ENCODE measurements at regions of chr19 and their contacts with region 1.

Region 1: DNA sequence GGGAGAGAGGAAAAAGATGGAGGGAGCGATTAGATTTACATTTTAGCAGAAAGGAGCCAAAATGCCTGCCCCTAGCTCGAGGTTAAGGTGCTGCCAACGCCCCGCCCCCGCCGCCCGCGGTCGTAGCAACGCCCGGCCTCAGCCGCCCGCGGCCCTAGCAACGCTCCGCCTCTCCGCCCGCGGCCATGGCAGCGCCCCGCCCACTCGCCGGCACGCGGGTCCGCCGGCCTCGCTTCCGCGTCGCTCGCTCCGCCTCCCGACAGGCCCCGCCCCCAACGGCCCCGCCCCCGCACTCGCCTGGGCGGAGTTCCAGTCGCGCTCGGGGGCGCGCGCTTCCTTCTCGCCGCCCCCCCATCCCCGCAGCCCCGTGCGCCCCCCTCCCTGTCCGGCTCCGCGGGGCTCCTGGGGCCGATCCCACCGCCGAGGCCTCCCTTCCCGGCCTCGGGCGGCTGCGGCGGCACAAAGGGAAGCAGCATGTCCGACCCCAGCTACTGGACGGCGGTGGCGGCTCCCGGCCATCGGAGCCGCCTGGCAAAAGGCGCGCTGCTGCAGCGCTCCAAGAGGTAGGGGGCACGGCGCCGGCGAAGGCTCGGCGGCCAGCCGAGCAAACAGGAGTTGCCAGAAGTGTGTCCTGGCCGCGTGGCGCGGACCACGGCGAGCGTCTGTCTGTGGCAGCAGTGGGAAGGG is 20.3 kb downstream of the MAST3 start:
- DNase-seq: peak in 1 of 2 experiments; percentile 97
- H3K4me3 ChIP-seq: peak overlapping the region; percentile 70 to 85 (median 76)
- H3K27ac ChIP-seq: peak overlapping the region; percentile 50
- H3K4me1 ChIP-seq: peaks cover 3 to 21% (median 8%) of the 10 kb centered on the region in 4 experiments
- H3K27me3 ChIP-seq: peaks cover 0 to 3% (median 1%) of the 10 kb centered on the region in 4 experiments; a peak in 1 of 7 replicates
- CTCF ChIP-seq: no peak
- EP300 ChIP-seq: no peak
- POLR2A ChIP-seq: peak in 1 of 2 experiments; percentile 74; a peak in 2 of 3 replicates
- RAD21 ChIP-seq: no peak; a peak in 1 of 4 replicates

Region 2: DNA sequence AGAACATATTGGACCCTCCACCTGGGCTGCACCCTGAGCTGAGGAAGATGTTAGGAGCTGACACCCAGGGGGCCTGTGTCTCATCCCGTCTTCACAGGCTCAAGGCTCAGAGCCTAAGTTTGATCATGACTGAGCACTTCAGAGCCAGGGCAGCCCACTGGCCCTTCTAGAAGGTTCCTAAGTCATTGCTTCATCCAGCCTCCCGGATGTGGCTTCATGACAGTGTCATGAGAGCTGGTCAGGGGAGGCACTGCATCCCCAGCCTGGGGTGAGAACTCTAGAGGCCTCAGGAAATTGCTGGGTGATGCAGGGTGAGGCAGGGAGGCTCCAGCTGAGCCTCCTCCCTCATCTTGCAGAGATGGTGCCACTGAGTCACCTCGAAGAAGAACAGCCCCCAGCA is 10.2 kb after region 1 on chr19:
- CTCF ChIA-PET with region 1: interaction called, 4 read pairs
- POLR2A ChIA-PET with region 1: interaction called, 19 read pairs
- DNase-seq: no peak
- H3K4me3 ChIP-seq: no peak overlapping the region
- H3K27ac ChIP-seq: no peak overlapping the region
- H3K4me1 ChIP-seq: no peaks in the 10 kb centered on the region
- H3K27me3 ChIP-seq: no peaks in the 10 kb centered on the region
- CTCF ChIP-seq: no peak
- EP300 ChIP-seq: no peak
- POLR2A ChIP-seq: no peak
- RAD21 ChIP-seq: no peak

Region 3: DNA sequence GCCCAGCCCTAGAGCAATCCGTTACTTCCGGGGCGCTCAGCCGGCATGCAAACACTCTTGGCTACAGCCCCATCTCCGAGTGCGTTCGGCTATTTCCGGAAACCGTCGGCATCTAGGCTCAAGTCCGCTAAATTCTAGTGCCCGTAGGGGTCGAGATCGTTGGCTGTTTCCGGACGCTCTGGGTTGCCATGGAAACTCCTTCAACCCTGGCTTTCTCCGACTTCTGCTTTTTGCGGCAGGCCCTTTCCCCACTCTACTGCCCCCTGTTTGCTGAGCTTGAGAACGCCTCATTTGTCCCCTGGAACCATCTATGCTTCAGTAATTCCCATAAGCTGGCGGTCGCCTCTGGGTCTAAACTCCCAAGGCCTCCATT is 34.6 kb after region 1 on chr19:
- CTCF ChIA-PET with region 1: interaction called, 29 read pairs
- POLR2A ChIA-PET with region 1: interaction called, 7 read pairs
- DNase-seq: peak; percentile 97 to 99
- H3K4me3 ChIP-seq: peak overlapping the region; percentile 63 to 83 (median 76)
- H3K27ac ChIP-seq: peak overlapping the region; percentile 94
- H3K4me1 ChIP-seq: peaks cover 0 to 8% (median 4%) of the 10 kb centered on the region in 4 experiments; a peak in 4 of 7 replicates
- H3K27me3 ChIP-seq: no peaks in the 10 kb centered on the region
- CTCF ChIP-seq: peak; percentile 46 to 74 (median 46); a peak in 3 of 4 replicates
- EP300 ChIP-seq: no peak
- POLR2A ChIP-seq: no peak
- RAD21 ChIP-seq: peak in 1 of 2 experiments; percentile 21; a peak in 1 of 4 replicates

Region 4: GRCh38 chr19:18160971-18161635 is 43.3 kb after region 1 on chr19:
- CTCF ChIA-PET with region 1: interaction called, 24 read pairs
- POLR2A ChIA-PET with region 1: interaction called, 5 read pairs
- DNase-seq: peak in 1 of 2 experiments; percentile 92
- H3K4me3 ChIP-seq: peak overlapping the region in 2 of 4 experiments; percentile 2 to 45; a peak in 4 of 8 replicates
- H3K27ac ChIP-seq: no peak overlapping the region
- H3K4me1 ChIP-seq: peaks cover 0 to 10% (median 7%) of the 10 kb centered on the region in 4 experiments; a peak in 6 of 7 replicates
- H3K27me3 ChIP-seq: no peaks in the 10 kb centered on the region
- CTCF ChIP-seq: peak; percentile 47 to 93 (median 72)
- EP300 ChIP-seq: no peak
- POLR2A ChIP-seq: peak in 1 of 2 experiments; percentile 43; a peak in 1 of 3 replicates
- RAD21 ChIP-seq: 0 out of 4 replicates have a peak, but pooled peaks of 1 of the 2 experiments have one; percentile 28

Region 5: GRCh38 chr19:18167975-18168645 is 50.3 kb after region 1 on chr19:
- CTCF ChIA-PET with region 1: interaction called, 17 read pairs
- POLR2A ChIA-PET with region 1: interaction called, 4 read pairs
- DNase-seq: peak in 1 of 2 experiments; percentile 84
- H3K4me3 ChIP-seq: no peak overlapping the region
- H3K27ac ChIP-seq: no peak overlapping the region
- H3K4me1 ChIP-seq: peaks cover 0 to under 1% (median 0%) of the 10 kb centered on the region in 4 experiments; a peak in 2 of 7 replicates
- H3K27me3 ChIP-seq: no peaks in the 10 kb centered on the region
- CTCF ChIP-seq: peak; percentile 89 to 92 (median 90)
- EP300 ChIP-seq: no peak
- POLR2A ChIP-seq: no peak
- RAD21 ChIP-seq: peak; percentile 82 to 87

Measured in H1 (cell line).